ENCODE measurements at regions of chr6 and their contacts with region 1.

Region 1: DNA sequence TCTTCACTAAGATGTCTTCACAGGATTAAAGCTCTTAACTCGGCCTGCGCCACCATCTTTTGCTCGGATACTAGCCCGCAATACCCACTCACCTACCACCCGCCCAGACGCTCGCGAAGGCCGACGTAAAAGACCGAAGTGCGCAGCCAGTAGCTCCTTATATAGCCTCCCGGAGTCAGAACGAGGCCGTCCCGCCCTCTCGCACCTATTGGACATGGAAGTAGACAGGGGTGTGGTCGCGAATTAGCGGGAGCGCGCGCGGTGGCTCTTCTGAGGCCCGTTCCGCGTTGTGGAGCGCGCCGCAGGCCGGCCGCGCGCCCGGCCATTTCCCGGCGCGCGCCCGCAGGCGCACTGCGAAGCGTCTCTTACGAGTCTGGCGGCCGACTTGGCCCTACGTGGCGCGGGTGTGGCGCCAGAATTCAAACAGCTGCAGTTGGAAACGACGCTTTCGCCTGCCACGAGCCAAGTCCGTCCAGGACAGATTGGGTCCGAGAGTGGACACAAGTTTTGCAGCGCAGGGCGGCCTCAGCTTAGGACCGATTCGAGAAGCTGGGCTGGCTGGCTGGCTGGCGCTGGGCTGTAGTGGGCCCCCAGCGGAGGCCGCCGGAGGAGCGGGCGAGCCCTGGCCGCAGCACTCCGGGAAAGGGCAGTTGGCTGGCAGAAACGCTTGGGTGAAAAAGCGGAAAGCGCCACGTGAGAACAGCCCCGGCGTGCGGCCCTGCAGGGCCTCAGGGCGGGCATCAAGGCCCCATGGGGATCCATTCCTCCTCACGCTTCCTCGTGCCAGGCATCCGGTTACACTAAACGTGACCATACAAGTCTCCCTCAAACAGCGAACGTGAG is 36.1 kb upstream of the SYNCRIP start:
- DNase-seq: peak; percentile 98 to 99 (median 99)
- H3K4me3 ChIP-seq: peak overlapping the region; percentile 90 to 99
- H3K4me3 Mint-ChIP-seq: peak overlapping the region; percentile 97 to 100 (median 100)
- H3K27ac ChIP-seq: peak overlapping the region; percentile 87
- H3K27ac Mint-ChIP-seq: peak overlapping the region; percentile 98 to 100 (median 99)
- H3K4me1 ChIP-seq: peaks cover 46% of the 10 kb centered on the region
- H3K4me1 Mint-ChIP-seq: peaks cover 36 to 56% (median 41%) of the 10 kb centered on the region in 4 donors
- H3K27me3 ChIP-seq: no peaks in the 10 kb centered on the region
- H3K27me3 Mint-ChIP-seq: no peaks in the 10 kb centered on the region

Region 2: GRCh38 chr6:84227434-84228197 is 1451.2 kb before region 1 on chr6 and contains the start of gene CEP162:
- CTCF ChIA-PET with region 1: no interaction called
- POLR2A ChIA-PET with region 1: no interaction called
- intact Hi-C with region 1: loop called (anchors 1 kb)
- DNase-seq: peak; percentile 89 to 94 (median 91)
- H3K4me3 ChIP-seq: peak within 1 kb of the TSS; percentile 94 to 95
- H3K4me3 Mint-ChIP-seq: peak within 1 kb of the TSS; percentile 96 to 100 (median 98)
- H3K27ac ChIP-seq: peak within 1 kb of the TSS; percentile 69
- H3K27ac Mint-ChIP-seq: peak within 1 kb of the TSS; percentile 90 to 98 (median 96)
- H3K4me1 ChIP-seq: peaks cover 17% of the 10 kb centered on the region
- H3K4me1 Mint-ChIP-seq: peaks cover 8 to 32% (median 19%) of the 10 kb centered on the region in 4 donors
- H3K27me3 ChIP-seq: no peaks in the 10 kb centered on the region
- H3K27me3 Mint-ChIP-seq: peaks cover 5 to 6% of the 10 kb centered on the region in 2 donors
- total RNA-seq, gene CEP162: 10.3 to 10.4 TPM

Region 3: DNA sequence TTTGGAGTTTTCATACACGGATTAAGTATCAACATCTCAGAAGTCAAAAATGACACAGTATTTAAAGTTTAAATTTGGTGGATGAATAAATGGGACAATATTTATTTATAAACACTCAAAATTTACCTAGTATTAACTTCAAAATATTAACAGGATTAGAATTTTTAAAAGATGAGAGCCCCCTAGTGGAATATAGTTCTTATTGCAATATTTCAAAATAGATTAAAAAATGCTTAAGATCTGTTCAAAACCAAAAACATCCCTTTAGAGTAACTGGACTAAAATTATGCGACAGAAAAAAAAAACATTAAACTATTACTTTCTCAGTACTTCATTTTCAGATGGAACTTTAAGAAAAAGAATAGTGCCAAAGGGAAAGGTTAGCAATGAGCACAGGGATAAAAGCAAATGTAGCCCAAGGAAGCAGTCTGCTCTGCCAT is 141.7 kb before region 1 on chr6:
- CTCF ChIA-PET with region 1: interaction called, 6 read pairs
- POLR2A ChIA-PET with region 1: interaction called, 11 read pairs
- intact Hi-C with region 1: loop called (anchors 2 kb)
- DNase-seq: peak in 1 of 5 donors; percentile 6
- H3K4me3 ChIP-seq: no peak overlapping the region
- H3K4me3 Mint-ChIP-seq: no peak overlapping the region
- H3K27ac ChIP-seq: no peak overlapping the region
- H3K27ac Mint-ChIP-seq: peak overlapping the region in 1 of 7 donors; percentile 12
- H3K4me1 ChIP-seq: no peaks in the 10 kb centered on the region
- H3K4me1 Mint-ChIP-seq: peaks cover 0 to 2% (median under 1%) of the 10 kb centered on the region in 4 donors
- H3K27me3 ChIP-seq: no peaks in the 10 kb centered on the region
- H3K27me3 Mint-ChIP-seq: no peaks in the 10 kb centered on the region

Region 4: GRCh38 chr6:85612690-85613474 is 65.9 kb before region 1 on chr6:
- CTCF ChIA-PET with region 1: interaction called, 4 read pairs
- POLR2A ChIA-PET with region 1: interaction called, 14 read pairs
- intact Hi-C with region 1: no loop called
- DNase-seq: no peak
- H3K4me3 ChIP-seq: no peak overlapping the region
- H3K4me3 Mint-ChIP-seq: no peak overlapping the region
- H3K27ac ChIP-seq: no peak overlapping the region
- H3K27ac Mint-ChIP-seq: peak overlapping the region in 3 of 7 donors; percentile 19 to 42 (median 35)
- H3K4me1 ChIP-seq: no peaks in the 10 kb centered on the region
- H3K4me1 Mint-ChIP-seq: peaks cover 5 to 10% (median 7%) of the 10 kb centered on the region in 4 donors
- H3K27me3 ChIP-seq: no peaks in the 10 kb centered on the region
- H3K27me3 Mint-ChIP-seq: no peaks in the 10 kb centered on the region

Region 5: GRCh38 chr6:85628353-85628752 is 50.5 kb before region 1 on chr6:
- CTCF ChIA-PET with region 1: interaction called, 4 read pairs
- POLR2A ChIA-PET with region 1: interaction called, 1,033 read pairs
- intact Hi-C with region 1: loop called (anchors 10 kb)
- DNase-seq: no peak
- H3K4me3 ChIP-seq: no peak overlapping the region
- H3K4me3 Mint-ChIP-seq: no peak overlapping the region
- H3K27ac ChIP-seq: no peak overlapping the region
- H3K27ac Mint-ChIP-seq: peak overlapping the region in 4 of 7 donors; percentile 7 to 58 (median 44)
- H3K4me1 ChIP-seq: peaks cover 45% of the 10 kb centered on the region
- H3K4me1 Mint-ChIP-seq: peaks cover 42 to 77% (median 62%) of the 10 kb centered on the region in 4 donors
- H3K27me3 ChIP-seq: no peaks in the 10 kb centered on the region
- H3K27me3 Mint-ChIP-seq: no peaks in the 10 kb centered on the region

Region 6: GRCh38 chr6:85660181-85660611 is 18.6 kb before region 1 on chr6:
- CTCF ChIA-PET with region 1: interaction called, 3 read pairs
- POLR2A ChIA-PET with region 1: interaction called, 10 read pairs
- intact Hi-C with region 1: no loop called
- DNase-seq: no peak
- H3K4me3 ChIP-seq: no peak overlapping the region
- H3K4me3 Mint-ChIP-seq: no peak overlapping the region
- H3K27ac ChIP-seq: no peak overlapping the region
- H3K27ac Mint-ChIP-seq: no peak overlapping the region
- H3K4me1 ChIP-seq: no peaks in the 10 kb centered on the region
- H3K4me1 Mint-ChIP-seq: no peaks in the 10 kb centered on the region
- H3K27me3 ChIP-seq: no peaks in the 10 kb centered on the region
- H3K27me3 Mint-ChIP-seq: no peaks in the 10 kb centered on the region

Region 7: DNA sequence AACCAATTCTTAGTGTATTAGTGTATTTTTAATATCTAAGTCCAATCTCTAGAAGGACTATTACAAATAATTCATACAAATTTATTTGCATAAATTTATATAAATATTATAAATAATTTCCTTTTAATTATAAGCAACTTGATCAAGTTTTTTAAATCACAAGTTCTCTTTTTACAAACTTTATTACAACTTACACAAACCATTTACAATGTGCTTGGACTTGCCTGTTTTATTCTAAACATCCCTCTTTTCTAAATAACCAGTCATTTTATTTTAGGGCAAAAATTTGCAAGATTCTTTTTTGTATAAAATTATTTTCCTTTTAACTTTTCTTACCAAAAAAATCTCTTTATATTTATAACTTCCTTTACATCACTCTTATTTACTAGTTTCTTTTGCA is 47.4 kb after region 1 on chr6:
- CTCF ChIA-PET with region 1: no interaction called
- POLR2A ChIA-PET with region 1: no interaction called
- intact Hi-C with region 1: no loop called
- DNase-seq: no peak
- H3K4me3 ChIP-seq: no peak overlapping the region
- H3K4me3 Mint-ChIP-seq: no peak overlapping the region
- H3K27ac ChIP-seq: no peak overlapping the region
- H3K27ac Mint-ChIP-seq: no peak overlapping the region
- H3K4me1 ChIP-seq: no peaks in the 10 kb centered on the region
- H3K4me1 Mint-ChIP-seq: no peaks in the 10 kb centered on the region
- H3K27me3 ChIP-seq: no peaks in the 10 kb centered on the region
- H3K27me3 Mint-ChIP-seq: peaks cover 1 to 7% of the 10 kb centered on the region in 2 donors

Region 8: DNA sequence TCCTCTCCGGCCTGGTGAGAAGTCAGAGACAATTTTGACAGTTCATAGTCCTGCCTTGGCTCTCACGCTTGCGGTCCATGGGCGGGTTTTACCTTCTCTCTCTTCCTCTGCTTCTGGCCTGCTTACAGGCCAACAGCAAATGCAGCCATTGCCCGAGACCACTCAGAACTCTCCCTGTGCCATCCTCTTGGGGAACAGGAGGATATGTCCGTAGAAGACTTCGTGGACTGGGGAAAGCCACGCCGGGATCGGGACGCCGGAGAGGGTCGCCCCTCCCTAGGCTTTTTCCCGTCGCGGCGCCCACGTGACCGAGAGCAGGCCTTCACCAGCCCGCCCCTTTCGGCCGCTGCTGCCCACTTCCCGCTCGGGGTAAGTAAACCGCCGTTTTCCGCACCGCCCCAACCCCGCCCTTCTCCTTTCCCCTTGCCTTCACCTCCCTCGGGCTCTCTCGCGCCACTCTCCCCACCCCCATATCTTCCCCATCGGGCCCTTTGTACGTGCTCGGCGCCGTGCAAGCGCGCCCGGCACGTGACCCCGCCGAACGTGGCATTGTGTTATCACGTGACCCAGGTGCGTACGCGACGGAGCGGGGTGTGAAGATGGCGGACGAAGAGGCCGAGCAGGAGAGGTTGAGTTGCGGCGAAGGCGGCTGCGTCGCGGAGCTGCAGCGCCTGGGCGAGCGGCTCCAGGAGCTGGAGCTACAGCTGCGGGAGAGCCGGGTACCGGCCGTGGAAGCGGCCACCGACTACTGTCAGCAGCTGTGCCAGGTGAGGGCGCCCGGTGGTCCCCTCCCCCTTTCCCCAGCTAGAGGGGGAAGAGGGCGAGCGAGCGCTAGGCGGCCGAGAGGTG is 1476.4 kb after region 1 on chr6 and contains the start of gene ZNF292:
- CTCF ChIA-PET with region 1: no interaction called
- POLR2A ChIA-PET with region 1: no interaction called
- intact Hi-C with region 1: loop called (anchors 10 kb)
- DNase-seq: peak; percentile 92 to 96 (median 93)
- H3K4me3 ChIP-seq: peak within 1 kb of the TSS; percentile 54 to 93
- H3K4me3 Mint-ChIP-seq: peak within 1 kb of the TSS; percentile 91 to 100 (median 96)
- H3K27ac ChIP-seq: peak within 1 kb of the TSS; percentile 91
- H3K27ac Mint-ChIP-seq: peak within 1 kb of the TSS; percentile 92 to 99 (median 96)
- H3K4me1 ChIP-seq: peaks cover 73% of the 10 kb centered on the region
- H3K4me1 Mint-ChIP-seq: peaks cover 38 to 70% (median 51%) of the 10 kb centered on the region in 4 donors
- H3K27me3 ChIP-seq: no peaks in the 10 kb centered on the region
- H3K27me3 Mint-ChIP-seq: no peaks in the 10 kb centered on the region
- total RNA-seq, gene ZNF292: 74.8 to 82.1 TPM

Measured in CD4-positive, alpha-beta memory T cell (primary cell).